Endothelial cell of umbilical vein (primary cell): ENCODE measurements at regions of chr12 and their contacts with region 1.

Region 1: GRCh38 chr12:89542912-89543592 is 17.2 kb upstream of the POC1B start:
- DNase-seq: peak; percentile 79
- H3K4me3 ChIP-seq: no peak overlapping the region
- H3K27ac ChIP-seq: no peak overlapping the region
- H3K4me1 ChIP-seq: peaks cover 20% of the 10 kb centered on the region
- H3K27me3 ChIP-seq: no peaks in the 10 kb centered on the region
- CTCF ChIP-seq: peak; percentile 80 to 82
- POLR2A ChIP-seq: no peak

Region 2: DNA sequence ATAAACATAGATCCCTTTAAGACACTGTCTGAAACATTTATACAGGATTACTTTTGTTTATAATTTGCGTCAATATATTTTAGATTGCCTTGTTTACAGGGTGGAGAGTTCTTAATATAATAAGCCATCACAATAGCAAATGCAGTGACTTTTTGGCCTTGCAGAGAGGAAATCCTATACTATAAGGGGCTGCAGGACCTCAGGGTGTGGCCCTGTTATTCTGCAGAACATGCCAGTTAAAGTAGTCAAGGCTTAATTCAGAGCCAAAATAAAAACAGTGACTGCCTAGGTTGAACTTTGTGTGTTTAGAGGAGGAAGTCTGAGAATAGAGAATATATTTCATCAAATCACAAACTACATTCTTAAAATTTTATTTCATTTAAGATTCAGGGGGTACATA is 572.3 kb before region 1 on chr12:
- CTCF ChIA-PET with region 1: no interaction called
- POLR2A ChIA-PET with region 1: no interaction called
- dilution Hi-C with region 1: no loop called
- intact Hi-C with region 1: no loop called
- DNase-seq: no peak
- H3K4me3 ChIP-seq: no peak overlapping the region
- H3K27ac ChIP-seq: no peak overlapping the region
- H3K4me1 ChIP-seq: no peaks in the 10 kb centered on the region
- H3K27me3 ChIP-seq: no peaks in the 10 kb centered on the region
- CTCF ChIP-seq: no peak
- POLR2A ChIP-seq: no peak

Region 3: GRCh38 chr12:89514751-89515150 is 28.3 kb before region 1 on chr12:
- CTCF ChIA-PET with region 1: no interaction called
- POLR2A ChIA-PET with region 1: no interaction called
- dilution Hi-C with region 1: no loop called
- intact Hi-C with region 1: no loop called
- DNase-seq: no peak
- H3K4me3 ChIP-seq: no peak overlapping the region
- H3K27ac ChIP-seq: no peak overlapping the region
- H3K4me1 ChIP-seq: no peaks in the 10 kb centered on the region
- H3K27me3 ChIP-seq: no peaks in the 10 kb centered on the region
- CTCF ChIP-seq: no peak
- POLR2A ChIP-seq: no peak

Region 4: GRCh38 chr12:89618107-89618862 is 75.2 kb after region 1 on chr12:
- CTCF ChIA-PET with region 1: no interaction called
- POLR2A ChIA-PET with region 1: no interaction called
- dilution Hi-C with region 1: no loop called
- intact Hi-C with region 1: no loop called
- DNase-seq: no peak
- H3K4me3 ChIP-seq: no peak overlapping the region
- H3K27ac ChIP-seq: no peak overlapping the region
- H3K4me1 ChIP-seq: peaks cover 3% of the 10 kb centered on the region
- H3K27me3 ChIP-seq: no peaks in the 10 kb centered on the region
- CTCF ChIP-seq: no peak
- POLR2A ChIP-seq: no peak

Region 5: GRCh38 chr12:89862511-89863179 is 319.6 kb after region 1 on chr12:
- CTCF ChIA-PET with region 1: no interaction called
- POLR2A ChIA-PET with region 1: no interaction called
- dilution Hi-C with region 1: no loop called
- intact Hi-C with region 1: loop called (anchors 5 kb)
- DNase-seq: peak; percentile 61
- H3K4me3 ChIP-seq: no peak overlapping the region
- H3K27ac ChIP-seq: peak overlapping the region; percentile 40
- H3K4me1 ChIP-seq: peaks cover 18% of the 10 kb centered on the region
- H3K27me3 ChIP-seq: no peaks in the 10 kb centered on the region
- CTCF ChIP-seq: no peak
- POLR2A ChIP-seq: no peak

Region 6: GRCh38 chr12:90102957-90103652 is 560.1 kb after region 1 on chr12:
- CTCF ChIA-PET with region 1: interaction called, 41 read pairs
- POLR2A ChIA-PET with region 1: no interaction called
- dilution Hi-C with region 1: no loop called
- intact Hi-C with region 1: loop called (anchors 1 kb)
- DNase-seq: peak; percentile 63
- H3K4me3 ChIP-seq: no peak overlapping the region
- H3K27ac ChIP-seq: no peak overlapping the region
- H3K4me1 ChIP-seq: no peaks in the 10 kb centered on the region
- H3K27me3 ChIP-seq: no peaks in the 10 kb centered on the region
- CTCF ChIP-seq: peak; percentile 34 to 54
- POLR2A ChIP-seq: no peak

Region 7: DNA sequence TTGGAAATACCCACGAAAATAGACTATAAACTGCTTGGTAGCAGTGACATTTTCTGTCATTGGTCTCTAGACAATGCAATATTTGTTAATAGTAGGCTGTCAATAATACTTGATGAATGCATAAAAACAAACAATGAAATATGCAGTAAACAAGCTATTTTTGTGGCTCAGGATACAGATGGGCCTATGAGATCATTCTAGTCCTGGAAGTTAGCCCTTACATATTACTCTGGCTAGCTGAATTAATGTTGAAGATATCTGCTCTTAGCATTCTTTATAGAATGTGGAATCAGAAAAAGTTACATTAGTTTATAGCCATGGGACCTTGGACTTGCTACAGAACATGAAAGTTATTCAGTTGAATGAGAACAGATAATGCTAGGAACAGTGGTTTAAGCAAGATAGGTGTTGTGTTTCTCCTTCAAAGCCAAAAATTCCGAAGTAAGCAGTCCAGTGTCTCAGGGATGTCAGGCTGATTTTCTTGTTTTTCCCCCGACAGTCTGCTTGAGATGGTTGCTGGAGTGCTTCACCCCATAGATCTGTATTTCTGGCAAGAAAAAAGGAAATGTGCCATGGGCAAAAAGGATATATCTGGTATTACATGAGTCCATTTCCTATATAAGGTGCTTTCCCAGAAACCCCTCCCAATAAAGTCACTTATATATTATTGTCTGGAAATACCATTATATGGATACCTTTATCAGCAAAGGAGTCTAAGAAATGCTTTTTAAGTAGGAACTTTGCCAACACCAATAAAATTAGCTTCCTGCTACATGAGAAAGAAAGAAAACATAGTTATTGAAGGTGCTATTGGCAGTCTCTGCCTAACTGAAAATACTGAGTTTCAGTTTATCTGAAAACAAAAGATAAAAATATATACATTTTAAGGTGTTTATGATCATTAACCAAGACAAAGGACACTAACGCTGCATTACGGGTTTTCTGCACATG is 785.0 kb after region 1 on chr12:
- CTCF ChIA-PET with region 1: no interaction called
- POLR2A ChIA-PET with region 1: no interaction called
- dilution Hi-C with region 1: no loop called
- intact Hi-C with region 1: loop called (anchors 5 kb)
- DNase-seq: peak; percentile 89
- H3K4me3 ChIP-seq: no peak overlapping the region
- H3K27ac ChIP-seq: peak overlapping the region; percentile 97
- H3K4me1 ChIP-seq: peaks cover 53% of the 10 kb centered on the region
- H3K27me3 ChIP-seq: no peaks in the 10 kb centered on the region
- CTCF ChIP-seq: no peak
- POLR2A ChIP-seq: no peak

Region 8: GRCh38 chr12:90854136-90854689 is 1311.2 kb after region 1 on chr12:
- CTCF ChIA-PET with region 1: interaction called, 25 read pairs
- POLR2A ChIA-PET with region 1: no interaction called
- dilution Hi-C with region 1: no loop called
- intact Hi-C with region 1: loop called (anchors 1 kb)
- DNase-seq: peak; percentile 60
- H3K4me3 ChIP-seq: no peak overlapping the region
- H3K27ac ChIP-seq: no peak overlapping the region
- H3K4me1 ChIP-seq: no peaks in the 10 kb centered on the region
- H3K27me3 ChIP-seq: no peaks in the 10 kb centered on the region
- CTCF ChIP-seq: peak; percentile 59 to 63
- POLR2A ChIP-seq: no peak